Right cardiac atrium (tissue), 5 donors: ENCODE measurements at regions of chr13 and their contacts with region 1.

Region 1: DNA sequence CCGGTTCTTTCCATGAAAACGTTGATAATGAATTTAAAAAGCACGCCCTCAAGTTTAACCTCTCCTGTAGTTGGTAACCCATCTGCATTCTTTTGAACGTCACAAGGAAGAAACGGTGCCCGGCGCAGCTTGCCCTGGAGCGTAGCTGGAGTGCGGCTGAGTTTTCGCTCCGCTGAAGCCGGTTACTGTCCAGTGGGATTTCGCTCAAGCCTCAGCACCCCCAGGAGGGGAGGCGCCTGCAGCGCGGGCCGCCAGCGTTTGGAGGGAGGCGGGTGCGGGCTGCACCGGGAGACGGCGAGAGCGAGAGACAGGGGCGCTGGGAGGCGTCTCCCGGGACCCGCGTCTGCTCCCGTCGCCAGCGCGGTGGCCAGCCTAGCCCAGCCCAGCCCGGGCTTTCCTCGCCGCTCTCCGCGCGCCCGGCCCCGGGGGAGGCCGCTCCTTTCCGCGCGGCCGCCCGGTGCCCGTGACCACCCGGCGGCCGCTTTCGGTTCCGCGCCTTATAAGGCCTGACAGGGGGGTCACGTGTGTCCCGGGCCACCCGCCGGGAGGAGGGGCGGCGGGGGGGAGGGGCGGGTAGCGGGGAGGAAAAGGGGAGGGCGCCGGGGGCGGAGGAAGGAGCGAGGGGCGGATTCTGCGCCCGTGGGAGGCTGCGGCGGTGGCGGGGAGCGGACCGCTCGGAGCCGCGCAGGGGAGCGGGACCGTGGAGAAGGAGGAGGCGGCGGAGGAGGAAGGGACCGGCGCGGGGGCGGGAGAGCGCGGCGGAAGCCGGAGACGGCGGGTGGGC is 8.3 kb upstream of the DGKH start:
- DNase-seq: peak; percentile 93 to 98 (median 97)
- ATAC-seq: peak; percentile 95 to 96
- H3K4me3 ChIP-seq: peak overlapping the region; percentile 95
- H3K27ac ChIP-seq: peak overlapping the region; percentile 99
- H3K4me1 ChIP-seq: no peaks in the 10 kb centered on the region
- H3K27me3 ChIP-seq: no peaks in the 10 kb centered on the region

Region 2: DNA sequence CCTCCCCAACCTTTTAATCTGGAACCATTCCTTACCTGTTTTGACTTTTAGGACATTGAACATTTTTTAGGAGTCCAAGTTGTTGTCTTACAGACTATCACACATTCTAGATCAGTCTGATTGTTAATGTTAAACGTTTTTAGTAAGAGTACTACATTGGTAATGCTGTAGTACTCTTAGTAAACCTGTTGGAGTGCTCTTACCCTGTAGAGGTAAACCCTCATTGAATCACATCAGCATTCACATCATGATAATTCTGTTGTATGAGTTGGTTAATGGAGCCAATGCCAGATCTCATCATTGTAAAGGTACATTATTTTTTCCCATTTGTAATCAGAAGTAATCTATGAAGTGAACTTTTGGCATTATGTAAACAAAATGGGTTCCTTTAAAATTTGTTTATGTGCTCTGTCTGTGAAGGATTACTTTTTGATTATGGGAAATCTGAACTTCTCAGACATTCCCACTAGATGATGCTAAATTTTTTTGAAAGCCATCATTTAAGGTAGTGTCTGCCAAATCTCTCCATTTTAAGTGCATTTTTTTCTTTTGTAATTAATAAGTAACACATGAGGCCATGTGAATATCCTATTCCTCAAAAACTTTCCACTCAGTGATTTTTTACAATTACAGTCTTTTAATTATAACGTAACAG is 134.4 kb before region 1 on chr13:
- intact Hi-C with region 1: loop called in 1 of 4 experiments (anchors 10 kb)
- DNase-seq: no peak
- ATAC-seq: peak; percentile 45 to 50
- H3K4me3 ChIP-seq: no peak overlapping the region
- H3K27ac ChIP-seq: no peak overlapping the region
- H3K4me1 ChIP-seq: no peaks in the 10 kb centered on the region
- H3K27me3 ChIP-seq: no peaks in the 10 kb centered on the region

Region 3: DNA sequence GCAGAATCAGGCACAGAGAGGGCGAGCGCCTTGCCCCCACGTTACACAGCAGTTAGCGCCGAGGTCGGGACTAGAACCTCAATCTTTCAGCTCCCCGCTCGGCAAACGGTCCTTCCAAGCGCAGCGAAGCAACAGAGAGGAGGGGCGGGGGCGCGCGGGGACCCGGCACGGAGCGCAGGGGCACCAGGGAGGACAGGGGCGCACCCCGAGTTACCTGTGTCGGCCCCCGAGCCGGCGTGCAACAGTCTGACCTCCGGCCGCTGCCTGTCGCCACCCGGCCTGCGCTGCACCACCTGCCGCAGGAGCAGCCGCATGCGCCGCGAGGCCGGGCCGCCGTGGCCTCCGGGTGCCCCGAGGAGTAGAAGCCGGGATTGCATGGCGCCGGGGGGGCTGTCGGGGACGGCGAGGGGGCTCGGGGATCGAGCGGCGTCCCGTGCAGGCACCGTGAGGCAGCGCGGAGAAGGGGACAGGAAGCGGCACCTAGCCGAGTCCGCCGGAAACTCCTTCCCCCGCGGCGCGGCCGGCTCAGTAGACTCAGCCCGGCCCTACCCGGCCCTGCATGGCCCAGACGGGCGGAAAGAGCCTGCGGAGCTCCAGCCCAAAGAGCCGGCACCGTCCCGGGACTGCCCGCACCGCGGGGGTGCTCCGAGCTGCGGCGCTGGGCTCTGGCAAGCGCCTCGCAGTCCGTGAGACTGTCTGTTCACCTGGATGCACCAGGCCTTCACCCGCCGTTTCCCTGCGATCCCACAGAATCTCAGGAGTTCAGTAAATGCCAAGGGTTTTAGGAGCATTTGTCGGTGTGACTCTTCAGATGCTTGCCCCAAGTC is 79.3 kb before region 1 on chr13 and contains the start of gene VWA8:
- intact Hi-C with region 1: loop called in 1 of 4 experiments (anchors 2 kb)
- DNase-seq: peak; percentile 87 to 94 (median 94)
- ATAC-seq: peak; percentile 97 to 98
- H3K4me3 ChIP-seq: peak within 1 kb of the TSS; percentile 88
- H3K27ac ChIP-seq: peak within 1 kb of the TSS; percentile 92
- H3K4me1 ChIP-seq: no peaks in the 10 kb centered on the region
- H3K27me3 ChIP-seq: no peaks in the 10 kb centered on the region
- total RNA-seq, gene VWA8: 33.0 to 41.7 (median 36.0) TPM

Region 4: DNA sequence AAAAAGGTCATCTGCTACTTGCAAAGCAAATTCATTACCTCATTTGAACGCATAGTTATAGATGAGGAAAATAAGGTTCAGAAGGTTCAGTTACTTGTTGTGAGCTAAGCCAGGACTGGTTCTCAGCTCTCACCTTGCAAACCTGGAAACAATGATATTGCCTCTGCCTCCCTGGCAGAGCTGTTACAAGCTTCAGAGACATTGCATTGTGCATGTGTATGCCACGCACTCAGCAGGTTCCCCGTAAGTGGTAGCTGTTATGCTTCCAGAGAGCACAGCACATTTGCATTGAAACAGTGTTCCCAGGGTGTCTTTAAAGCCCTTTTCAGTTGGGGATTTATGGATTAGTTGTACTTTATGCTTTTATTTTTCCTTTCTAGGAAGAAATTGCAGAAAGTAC is 88.9 kb after region 1 on chr13:
- intact Hi-C with region 1: no loop called
- DNase-seq: no peak
- ATAC-seq: no peak
- H3K4me3 ChIP-seq: no peak overlapping the region
- H3K27ac ChIP-seq: no peak overlapping the region
- H3K4me1 ChIP-seq: no peaks in the 10 kb centered on the region
- H3K27me3 ChIP-seq: no peaks in the 10 kb centered on the region